Activated CD8-positive, alpha-beta memory T cell treated with anti-CD3 and anti-CD28 coated beads, Interleukin-2, amount 10 ng/mL, durations not matched to agents 7 days and 5 days (primary cell): ENCODE measurements at regions of chr13 and their contacts with region 1.

Region 1: DNA sequence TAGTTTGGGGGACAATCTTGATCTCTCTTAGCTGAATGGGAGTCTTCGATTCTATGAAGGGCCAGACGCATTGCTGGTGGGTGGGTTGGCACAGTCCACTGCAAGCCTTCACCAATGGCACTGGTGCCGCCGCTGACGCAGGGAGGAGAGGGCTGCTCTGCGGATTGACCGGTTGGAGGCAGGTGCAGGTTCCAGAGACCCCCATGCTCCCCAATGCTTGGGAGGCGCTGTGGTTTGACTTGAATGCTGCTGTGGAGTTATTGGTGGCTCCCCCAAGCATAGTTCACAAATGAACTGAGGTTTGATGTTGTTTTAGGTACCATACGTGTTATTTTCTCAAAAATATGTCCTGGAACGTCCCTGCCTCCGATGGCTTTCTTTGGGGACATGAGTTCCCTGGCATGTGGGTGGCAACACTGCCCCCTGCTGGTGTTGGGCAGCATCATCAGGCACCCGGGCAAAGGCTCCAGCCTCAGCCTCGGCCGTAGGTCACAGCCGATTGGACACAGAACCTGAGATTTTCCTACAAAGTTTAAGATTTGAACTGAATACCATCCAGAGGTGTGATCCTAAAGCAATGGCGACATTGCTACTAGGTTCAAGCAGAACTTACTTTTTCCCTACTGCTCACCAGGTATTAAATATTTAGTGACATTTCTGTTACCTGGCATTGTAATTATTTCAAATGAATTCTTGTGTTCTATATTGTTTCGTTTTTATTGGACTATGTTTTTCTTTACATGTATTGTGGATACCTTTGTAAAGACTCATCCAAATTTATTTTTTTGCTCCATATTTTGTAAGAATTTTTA is 95.5 kb downstream of the ANKRD10 start:
- DNase-seq: peak; percentile 83
- ATAC-seq: peak; percentile 78
- H3K4me3 Mint-ChIP-seq: no peak overlapping the region
- H3K27ac Mint-ChIP-seq: no peak overlapping the region
- H3K4me1 Mint-ChIP-seq: peaks cover 24% of the 10 kb centered on the region
- H3K27me3 Mint-ChIP-seq: no peaks in the 10 kb centered on the region

Region 2: DNA sequence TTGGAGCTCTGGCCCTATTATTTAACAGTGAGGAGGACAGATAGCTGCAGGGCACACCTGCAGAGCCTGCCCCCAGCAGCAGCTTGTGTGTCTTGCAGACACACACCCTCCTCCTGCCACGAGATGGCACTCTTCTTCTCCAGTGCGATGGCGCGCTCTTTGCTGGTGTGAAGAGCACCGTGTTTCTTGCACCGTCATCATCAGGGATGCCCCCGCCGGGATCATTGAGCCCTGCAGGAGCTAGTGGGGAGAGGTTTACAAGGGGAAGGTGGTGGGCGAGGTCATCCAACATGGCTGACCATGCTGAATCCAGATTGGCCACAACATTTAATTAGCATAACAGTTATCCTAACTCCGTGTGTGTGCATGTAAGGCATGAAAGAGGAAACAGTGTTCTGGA is 363.5 kb before region 1 on chr13:
- CTCF ChIA-PET with region 1: interaction called, 12 read pairs
- DNase-seq: peak; percentile 79
- ATAC-seq: peak; percentile 96
- H3K4me3 Mint-ChIP-seq: peak overlapping the region; percentile 25
- H3K27ac Mint-ChIP-seq: no peak overlapping the region
- H3K4me1 Mint-ChIP-seq: peaks cover 4% of the 10 kb centered on the region
- H3K27me3 Mint-ChIP-seq: peaks cover 25% of the 10 kb centered on the region

Region 3: DNA sequence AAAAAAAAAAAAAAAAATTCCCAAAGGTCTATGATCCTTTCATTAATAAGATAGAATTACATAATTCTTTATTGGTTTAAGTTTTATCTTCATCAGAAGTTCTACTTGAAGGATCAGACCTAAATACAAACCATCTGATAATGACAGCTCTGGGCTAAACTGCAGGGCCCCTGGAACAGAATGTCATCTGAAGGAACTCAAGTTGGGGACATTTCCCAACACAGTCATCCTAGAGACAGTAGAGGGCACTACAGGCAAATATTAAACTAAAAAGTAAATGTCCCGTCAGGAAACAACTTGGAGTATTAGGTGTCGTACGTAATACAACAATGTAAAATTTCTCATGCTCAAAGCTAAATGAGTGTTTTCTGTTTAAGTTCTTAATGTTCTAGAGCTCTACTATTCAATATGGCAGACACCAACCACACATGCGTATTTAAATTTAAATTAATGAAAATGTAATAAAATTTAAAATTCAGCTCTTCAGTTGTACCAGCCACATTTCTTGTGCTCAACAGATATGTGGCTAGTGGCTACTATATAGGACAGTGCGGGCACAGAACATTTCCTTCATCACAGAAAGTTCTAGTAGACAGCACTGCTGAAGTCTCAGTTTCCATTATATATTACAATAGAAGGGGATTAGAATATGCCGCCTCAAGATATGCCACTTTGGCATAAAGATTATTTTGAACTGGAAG is 225.8 kb before region 1 on chr13:
- CTCF ChIA-PET with region 1: interaction called, 15 read pairs
- DNase-seq: no peak
- ATAC-seq: peak; percentile 73
- H3K4me3 Mint-ChIP-seq: no peak overlapping the region
- H3K27ac Mint-ChIP-seq: no peak overlapping the region
- H3K4me1 Mint-ChIP-seq: peaks cover 1% of the 10 kb centered on the region
- H3K27me3 Mint-ChIP-seq: peaks cover 18% of the 10 kb centered on the region

Region 4: DNA sequence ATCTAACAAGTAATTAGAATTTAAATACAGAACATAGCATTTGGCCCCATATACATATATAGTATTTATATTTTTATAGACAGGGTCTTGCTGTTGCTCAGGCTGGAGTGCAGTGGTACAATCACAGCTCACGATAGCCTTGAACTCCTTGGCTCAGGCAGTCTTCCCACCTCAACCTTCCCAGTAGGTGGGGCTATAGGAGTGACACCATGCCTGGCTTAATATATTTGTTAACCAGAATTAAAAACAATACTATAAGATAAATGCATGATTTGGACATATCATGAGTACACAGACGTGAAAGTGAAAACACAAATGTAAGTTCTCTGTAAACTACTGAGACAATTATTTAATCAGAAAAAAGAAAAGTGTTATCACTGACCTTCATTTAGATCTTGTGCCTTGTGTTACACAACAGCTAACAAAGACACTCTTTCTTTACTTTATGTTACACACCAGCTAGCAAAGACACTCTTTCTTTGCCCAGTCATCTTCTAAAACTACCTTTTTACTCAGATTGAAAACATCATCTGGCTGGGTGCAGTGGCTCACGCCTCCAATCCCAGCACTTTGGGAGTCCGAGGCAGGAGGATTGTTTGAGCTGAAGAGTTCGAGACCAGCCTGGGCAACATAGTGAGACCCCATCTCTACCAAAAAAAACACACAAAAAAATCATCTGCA is 136.1 kb before region 1 on chr13:
- CTCF ChIA-PET with region 1: interaction called, 10 read pairs
- DNase-seq: no peak
- ATAC-seq: peak; percentile 47
- H3K4me3 Mint-ChIP-seq: no peak overlapping the region
- H3K27ac Mint-ChIP-seq: no peak overlapping the region
- H3K4me1 Mint-ChIP-seq: peaks cover 1% of the 10 kb centered on the region
- H3K27me3 Mint-ChIP-seq: no peaks in the 10 kb centered on the region

Region 5: GRCh38 chr13:110831447-110832204 is 12.2 kb after region 1 on chr13:
- CTCF ChIA-PET with region 1: no interaction called
- DNase-seq: no peak
- ATAC-seq: no peak
- H3K4me3 Mint-ChIP-seq: no peak overlapping the region
- H3K27ac Mint-ChIP-seq: no peak overlapping the region
- H3K4me1 Mint-ChIP-seq: no peaks in the 10 kb centered on the region
- H3K27me3 Mint-ChIP-seq: peaks cover 10% of the 10 kb centered on the region